Naive thymus-derived CD4-positive, alpha-beta T cell (primary cell): ENCODE measurements at regions of chr5 and their contacts with region 1.

Region 1: GRCh38 chr5:115625579-115626444 is at the start of gene TMED7:
- DNase-seq: peak; percentile 98 to 100 (median 99)
- ATAC-seq: peak; percentile 97
- H3K4me3 ChIP-seq: peak within 1 kb of the TSS; percentile 93
- H3K4me3 Mint-ChIP-seq: no peak within 1 kb of the TSS
- H3K27ac ChIP-seq: peak within 1 kb of the TSS; percentile 96
- H3K27ac Mint-ChIP-seq: peak within 1 kb of the TSS in 5 of 9 donors; percentile 93 to 98 (median 98)
- H3K4me1 ChIP-seq: peaks cover 20 to 35% of the 10 kb centered on the region in 2 donors
- H3K4me1 Mint-ChIP-seq: peaks cover 11 to 37% (median 27%) of the 10 kb centered on the region in 7 donors
- H3K27me3 ChIP-seq: no peaks in the 10 kb centered on the region
- H3K27me3 Mint-ChIP-seq: peaks cover 0 to 6% (median 0%) of the 10 kb centered on the region in 5 donors
- total RNA-seq, gene TMED7: 41.7 to 58.0 (median 47.5) TPM

Region 2: GRCh38 chr5:114948986-114949621 is 676.7 kb before region 1 on chr5:
- CTCF ChIA-PET with region 1: no interaction called
- POLR2A ChIA-PET with region 1: no interaction called
- intact Hi-C with region 1: no loop called
- DNase-seq: no peak
- ATAC-seq: no peak
- H3K4me3 ChIP-seq: no peak overlapping the region
- H3K4me3 Mint-ChIP-seq: no peak overlapping the region
- H3K27ac ChIP-seq: no peak overlapping the region
- H3K27ac Mint-ChIP-seq: no peak overlapping the region
- H3K4me1 ChIP-seq: no peaks in the 10 kb centered on the region
- H3K4me1 Mint-ChIP-seq: no peaks in the 10 kb centered on the region
- H3K27me3 ChIP-seq: no peaks in the 10 kb centered on the region
- H3K27me3 Mint-ChIP-seq: no peaks in the 10 kb centered on the region

Region 3: GRCh38 chr5:115262321-115263077 is 363.3 kb before region 1 on chr5 and contains the start of gene PGGT1B:
- CTCF ChIA-PET with region 1: no interaction called
- POLR2A ChIA-PET with region 1: interaction called, 16 read pairs
- intact Hi-C with region 1: loop called in 1 of 2 experiments (anchors 1 kb)
- DNase-seq: peak; percentile 45 to 69 (median 64)
- ATAC-seq: peak; percentile 94
- H3K4me3 ChIP-seq: peak within 1 kb of the TSS; percentile 94
- H3K4me3 Mint-ChIP-seq: peak within 1 kb of the TSS; percentile 91 to 100 (median 96)
- H3K27ac ChIP-seq: peak within 1 kb of the TSS; percentile 76
- H3K27ac Mint-ChIP-seq: peak within 1 kb of the TSS; percentile 83 to 96 (median 94)
- H3K4me1 ChIP-seq: peaks cover 15 to 23% of the 10 kb centered on the region in 2 donors
- H3K4me1 Mint-ChIP-seq: peaks cover 33 to 59% (median 43%) of the 10 kb centered on the region in 7 donors
- H3K27me3 ChIP-seq: no peaks in the 10 kb centered on the region
- H3K27me3 Mint-ChIP-seq: peaks cover 0 to 4% (median 0%) of the 10 kb centered on the region in 5 donors
- total RNA-seq, gene PGGT1B: 34.5 to 49.1 (median 41.5) TPM

Region 4: GRCh38 chr5:115296124-115297022 is 329.4 kb before region 1 on chr5 and contains the start of gene CCDC112:
- CTCF ChIA-PET with region 1: no interaction called
- POLR2A ChIA-PET with region 1: interaction called, 5 read pairs
- intact Hi-C with region 1: loop called (anchors 1 kb)
- DNase-seq: peak; percentile 49 to 71 (median 67)
- ATAC-seq: peak; percentile 83
- H3K4me3 ChIP-seq: peak within 1 kb of the TSS; percentile 56
- H3K4me3 Mint-ChIP-seq: peak within 1 kb of the TSS; percentile 77 to 92 (median 89)
- H3K27ac ChIP-seq: peak within 1 kb of the TSS; percentile 47
- H3K27ac Mint-ChIP-seq: peak within 1 kb of the TSS in 8 of 9 donors; percentile 29 to 80 (median 69)
- H3K4me1 ChIP-seq: peaks cover 8 to 10% of the 10 kb centered on the region in 2 donors
- H3K4me1 Mint-ChIP-seq: peaks cover 5 to 18% (median 13%) of the 10 kb centered on the region in 7 donors
- H3K27me3 ChIP-seq: no peaks in the 10 kb centered on the region
- H3K27me3 Mint-ChIP-seq: peaks cover 0 to 69% (median 3%) of the 10 kb centered on the region in 5 donors
- total RNA-seq, gene CCDC112: 0.51 to 8.5 (median 3.9) TPM

Region 5: GRCh38 chr5:115601701-115602590 is 23.9 kb before region 1 on chr5 and contains the start of gene TICAM2:
- CTCF ChIA-PET with region 1: no interaction called
- POLR2A ChIA-PET with region 1: interaction called, 6 read pairs
- intact Hi-C with region 1: loop called (anchors 1 kb)
- DNase-seq: peak; percentile 39 to 74 (median 56)
- ATAC-seq: peak; percentile 84
- H3K4me3 ChIP-seq: peak within 1 kb of the TSS; percentile 63
- H3K4me3 Mint-ChIP-seq: peak within 1 kb of the TSS; percentile 71 to 89 (median 84)
- H3K27ac ChIP-seq: peak within 1 kb of the TSS; percentile 72
- H3K27ac Mint-ChIP-seq: peak within 1 kb of the TSS; percentile 69 to 94 (median 84)
- H3K4me1 ChIP-seq: no peaks in the 10 kb centered on the region
- H3K4me1 Mint-ChIP-seq: peaks cover 19 to 41% (median 32%) of the 10 kb centered on the region in 7 donors
- H3K27me3 ChIP-seq: no peaks in the 10 kb centered on the region
- H3K27me3 Mint-ChIP-seq: no peaks in the 10 kb centered on the region
- total RNA-seq, gene TICAM2: 0.93 to 3.7 (median 1.9) TPM

Region 6: DNA sequence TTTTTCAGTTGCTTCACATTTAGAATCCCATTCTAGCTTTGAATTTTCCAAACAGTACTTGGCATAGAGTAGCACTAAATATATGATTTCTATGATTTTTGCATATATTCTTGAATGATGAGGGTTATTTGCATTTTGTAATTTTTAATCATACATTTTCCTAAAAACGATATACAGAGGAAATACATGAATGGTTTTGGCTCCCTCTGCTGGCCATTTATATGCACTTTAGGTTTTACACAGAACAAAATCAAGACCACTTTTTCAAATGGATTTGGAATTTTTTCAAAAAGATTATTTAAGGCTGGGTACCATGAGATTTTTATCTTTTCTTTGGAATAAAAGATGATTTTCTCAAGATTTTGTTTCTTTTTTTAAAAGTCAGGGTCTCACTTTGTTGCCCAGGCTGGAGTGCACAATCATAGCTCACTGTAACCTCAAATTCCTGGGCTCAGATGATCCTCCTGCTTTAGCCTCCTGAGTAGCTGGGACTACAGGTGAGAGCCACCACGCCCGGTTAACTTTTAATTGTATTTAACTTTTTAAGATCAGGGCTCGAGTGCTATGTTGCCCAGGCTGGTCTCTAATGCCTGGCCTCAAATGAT is 442.3 kb after region 1 on chr5:
- CTCF ChIA-PET with region 1: interaction called, 3 read pairs
- POLR2A ChIA-PET with region 1: no interaction called
- intact Hi-C with region 1: loop called in 1 of 2 experiments (anchors 2 kb)
- DNase-seq: peak in 6 of 9 donors; percentile 31 to 51 (median 38)
- ATAC-seq: peak; percentile 46
- H3K4me3 ChIP-seq: no peak overlapping the region
- H3K4me3 Mint-ChIP-seq: no peak overlapping the region
- H3K27ac ChIP-seq: no peak overlapping the region
- H3K27ac Mint-ChIP-seq: no peak overlapping the region
- H3K4me1 ChIP-seq: no peaks in the 10 kb centered on the region
- H3K4me1 Mint-ChIP-seq: no peaks in the 10 kb centered on the region
- H3K27me3 ChIP-seq: no peaks in the 10 kb centered on the region
- H3K27me3 Mint-ChIP-seq: peaks cover 15 to 50% (median 40%) of the 10 kb centered on the region in 5 donors

Region 7: GRCh38 chr5:116084871-116085715 is 459.3 kb after region 1 on chr5 and contains the start of gene COMMD10:
- CTCF ChIA-PET with region 1: no interaction called
- POLR2A ChIA-PET with region 1: interaction called, 5 read pairs
- intact Hi-C with region 1: loop called (anchors 1 kb)
- DNase-seq: peak; percentile 65 to 88 (median 83)
- ATAC-seq: peak; percentile 95
- H3K4me3 ChIP-seq: peak within 1 kb of the TSS; percentile 54
- H3K4me3 Mint-ChIP-seq: peak within 1 kb of the TSS; percentile 87 to 98 (median 95)
- H3K27ac ChIP-seq: peak within 1 kb of the TSS; percentile 94
- H3K27ac Mint-ChIP-seq: peak within 1 kb of the TSS; percentile 90 to 99 (median 98)
- H3K4me1 ChIP-seq: peaks cover 13 to 16% of the 10 kb centered on the region in 2 donors
- H3K4me1 Mint-ChIP-seq: peaks cover 22 to 77% (median 66%) of the 10 kb centered on the region in 7 donors
- H3K27me3 ChIP-seq: no peaks in the 10 kb centered on the region
- H3K27me3 Mint-ChIP-seq: peaks cover 0 to 3% (median 0%) of the 10 kb centered on the region in 5 donors
- total RNA-seq, gene COMMD10: 29.4 to 50.6 (median 37.8) TPM